ENCODE measurements at regions of chr11 and their contacts with region 1.

Region 1: GRCh38 chr11:74929431-74930363 is 19.2 kb downstream of the XRRA1 start:
- DNase-seq: peak; percentile 67 to 71
- H3K4me3 ChIP-seq: no peak overlapping the region
- H3K27ac ChIP-seq: no peak overlapping the region
- H3K4me1 ChIP-seq: no peaks in the 10 kb centered on the region
- H3K27me3 ChIP-seq: no peaks in the 10 kb centered on the region
- CTCF ChIP-seq: peak; percentile 69 to 74

Region 2: GRCh38 chr11:74731301-74732094 is 198.2 kb before region 1 on chr11 and contains the start of gene CHRDL2:
- intact Hi-C with region 1: no loop called
- DNase-seq: peak in 1 of 2 donors; percentile 60
- H3K4me3 ChIP-seq: peak within 1 kb of the TSS; percentile 29 to 53
- H3K27ac ChIP-seq: no peak within 1 kb of the TSS
- H3K4me1 ChIP-seq: peaks cover 0 to 15% (median 13%) of the 10 kb centered on the region in 4 donors
- H3K27me3 ChIP-seq: peaks cover 0 to 42% of the 10 kb centered on the region in 2 donors
- CTCF ChIP-seq: no peak

Region 3: DNA sequence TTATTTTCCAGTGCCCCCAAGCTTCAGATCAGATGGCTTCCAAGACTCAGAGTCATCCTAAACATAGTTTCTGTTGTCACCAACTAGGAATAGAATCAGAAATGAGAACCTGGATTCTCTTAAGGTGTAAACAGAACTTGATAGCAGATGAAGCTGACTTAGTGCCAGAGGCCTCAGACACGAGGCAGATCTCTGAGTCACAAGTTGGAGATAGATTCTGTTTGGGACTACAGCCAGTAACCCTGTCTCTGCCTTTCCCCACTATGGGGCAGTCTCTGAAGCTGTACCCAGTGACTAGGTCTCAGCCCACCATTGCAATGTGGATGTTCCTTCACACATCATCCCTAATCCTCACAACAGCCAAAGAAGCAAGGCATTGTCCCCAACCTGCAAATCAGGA is 84.4 kb after region 1 on chr11:
- intact Hi-C with region 1: no loop called
- DNase-seq: no peak
- H3K4me3 ChIP-seq: no peak overlapping the region
- H3K27ac ChIP-seq: no peak overlapping the region
- H3K4me1 ChIP-seq: no peaks in the 10 kb centered on the region
- H3K27me3 ChIP-seq: no peaks in the 10 kb centered on the region
- CTCF ChIP-seq: no peak

Region 4: DNA sequence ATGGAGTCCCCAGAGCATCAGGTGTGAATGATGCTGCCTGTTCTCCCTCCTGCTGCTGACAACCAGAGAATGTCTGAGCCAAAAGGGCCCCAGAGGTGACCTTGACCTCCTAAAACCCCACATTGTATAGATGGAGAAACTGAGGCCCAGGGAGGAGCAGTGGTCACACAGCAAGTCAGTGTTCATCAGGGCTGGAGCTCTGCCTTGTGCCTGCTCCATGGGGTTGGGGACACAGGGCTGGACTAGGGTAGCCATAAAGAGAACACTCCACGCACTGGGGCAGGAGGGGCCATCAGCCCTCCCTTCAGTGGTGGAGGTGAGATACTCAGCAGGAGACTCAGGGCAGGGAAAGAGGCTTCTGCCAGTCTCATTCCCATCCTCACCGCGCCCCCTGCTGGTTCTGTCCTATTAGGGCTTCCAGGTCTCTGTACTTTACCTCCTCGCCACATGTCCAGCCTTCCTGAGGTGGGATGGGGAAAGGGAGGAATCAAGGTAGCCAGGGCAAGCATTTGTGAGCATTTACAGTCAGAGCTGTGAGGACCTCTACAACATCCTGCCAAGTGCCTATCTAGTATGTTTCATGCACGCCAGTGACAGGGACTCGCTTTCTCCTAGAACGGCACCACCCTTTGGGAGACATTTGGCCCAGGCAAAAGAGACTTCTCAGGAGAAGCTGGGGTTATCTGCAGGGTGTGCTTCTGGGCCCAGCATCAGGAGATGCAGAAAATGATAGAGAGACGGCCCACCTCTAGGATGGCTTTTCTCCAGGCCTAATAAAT is 102.3 kb after region 1 on chr11:
- intact Hi-C with region 1: loop called (anchors 5 kb)
- DNase-seq: peak in 1 of 2 donors; percentile 57
- H3K4me3 ChIP-seq: no peak overlapping the region
- H3K27ac ChIP-seq: no peak overlapping the region
- H3K4me1 ChIP-seq: no peaks in the 10 kb centered on the region
- H3K27me3 ChIP-seq: no peaks in the 10 kb centered on the region
- CTCF ChIP-seq: peak; percentile 45 to 52

Region 5: DNA sequence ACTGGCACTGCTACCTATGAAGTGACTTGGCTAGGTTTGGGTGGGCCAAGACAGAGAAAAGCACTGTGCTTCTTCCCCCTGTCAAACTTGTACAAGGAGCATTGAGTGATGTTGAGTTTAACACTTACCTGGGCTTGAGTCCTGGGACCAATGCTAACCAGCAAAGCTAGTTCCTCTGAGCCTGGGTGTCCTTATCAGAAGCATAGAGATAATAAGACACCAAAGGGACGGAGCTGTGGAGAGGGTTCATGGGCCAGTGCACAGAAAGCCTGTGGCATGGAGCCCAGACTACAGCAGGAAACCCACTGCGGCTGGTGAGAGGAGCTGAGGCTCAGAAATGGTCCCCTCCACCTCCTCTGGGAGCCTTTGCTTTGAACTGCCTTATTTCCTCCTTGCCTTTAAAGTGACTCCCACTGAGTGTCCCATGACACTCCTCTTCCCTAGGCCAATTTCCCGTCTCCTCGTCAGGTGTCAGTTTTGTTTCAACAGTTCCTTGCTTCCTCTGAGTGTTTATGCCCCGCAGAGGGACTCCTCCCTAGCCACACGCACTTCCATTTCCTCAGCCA is 230.6 kb after region 1 on chr11:
- intact Hi-C with region 1: no loop called
- DNase-seq: no peak
- H3K4me3 ChIP-seq: no peak overlapping the region
- H3K27ac ChIP-seq: no peak overlapping the region
- H3K4me1 ChIP-seq: no peaks in the 10 kb centered on the region
- H3K27me3 ChIP-seq: peaks cover 0 to 10% of the 10 kb centered on the region in 2 donors
- CTCF ChIP-seq: no peak

Region 6: GRCh38 chr11:75233742-75234172 is 304.1 kb after region 1 on chr11:
- intact Hi-C with region 1: loop called (anchors 10 kb)
- DNase-seq: no peak
- H3K4me3 ChIP-seq: no peak overlapping the region
- H3K27ac ChIP-seq: no peak overlapping the region
- H3K4me1 ChIP-seq: no peaks in the 10 kb centered on the region
- H3K27me3 ChIP-seq: peaks cover 0 to 43% of the 10 kb centered on the region in 2 donors
- CTCF ChIP-seq: no peak

Region 7: GRCh38 chr11:75249704-75250103 is 320.0 kb after region 1 on chr11:
- intact Hi-C with region 1: loop called (anchors 10 kb)
- DNase-seq: peak; percentile 1 to 17
- H3K4me3 ChIP-seq: no peak overlapping the region
- H3K27ac ChIP-seq: no peak overlapping the region
- H3K4me1 ChIP-seq: no peaks in the 10 kb centered on the region
- H3K27me3 ChIP-seq: peaks cover 0 to 30% of the 10 kb centered on the region in 2 donors
- CTCF ChIP-seq: no peak

Measured in tibial artery (tissue), 4 donors.